Activated naive CD4-positive, alpha-beta T cell treated with anti-CD3 and anti-CD28 coated beads for 36 hours (primary cell): ENCODE measurements at regions of chr2 and their contacts with region 1.

Region 1: DNA sequence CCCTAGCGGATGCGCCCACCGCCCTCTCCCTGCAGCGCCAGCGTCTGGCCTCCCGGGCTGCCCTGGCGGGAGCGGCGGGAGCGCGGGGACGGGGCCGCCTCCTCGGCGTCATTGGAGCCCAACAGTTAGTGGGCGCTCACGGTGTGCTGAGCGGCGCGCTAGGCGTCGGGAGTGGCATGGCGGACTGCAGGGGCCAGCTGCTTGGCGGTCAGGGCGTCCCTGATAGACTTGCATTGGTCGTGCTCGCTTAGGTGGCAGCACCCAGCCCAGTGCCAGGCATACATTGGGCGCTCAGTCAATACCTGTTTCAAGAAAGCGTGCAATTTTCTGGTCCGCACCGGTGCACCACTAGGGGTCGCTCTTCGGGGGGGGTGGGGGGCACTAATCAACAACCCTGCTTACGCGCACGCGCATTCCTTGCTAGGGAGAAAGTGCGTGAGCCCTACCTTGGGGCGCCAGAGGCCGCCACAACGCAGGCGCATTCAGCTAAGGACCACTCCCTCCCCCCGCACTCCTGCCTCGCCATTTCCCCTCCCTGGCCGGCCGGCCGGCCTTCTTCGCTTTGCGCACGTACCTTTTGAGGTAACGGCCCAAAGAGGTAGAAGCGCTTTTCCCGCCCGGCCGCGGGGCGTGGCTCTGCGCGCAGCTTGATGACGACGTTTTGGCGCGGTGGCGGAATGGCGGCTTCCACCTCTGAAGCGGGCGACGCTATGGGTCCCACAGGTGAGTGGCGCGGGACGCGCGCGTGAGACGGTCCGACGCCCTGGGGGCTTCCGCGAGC is 411 bp upstream of the MZT2A start:
- DNase-seq: peak; percentile 95
- H3K4me3 Mint-ChIP-seq: peak overlapping the region; percentile 86
- H3K27ac Mint-ChIP-seq: peak overlapping the region; percentile 85
- H3K4me1 Mint-ChIP-seq: peaks cover 43% of the 10 kb centered on the region
- H3K27me3 Mint-ChIP-seq: no peaks in the 10 kb centered on the region

Region 2: GRCh38 chr2:130372055-130372832 is 1120.4 kb before region 1 on chr2:
- CTCF ChIA-PET with region 1: no interaction called
- intact Hi-C with region 1: loop called (anchors 10 kb)
- DNase-seq: peak; percentile 82
- H3K4me3 Mint-ChIP-seq: peak overlapping the region; percentile 86
- H3K27ac Mint-ChIP-seq: peak overlapping the region; percentile 93
- H3K4me1 Mint-ChIP-seq: peaks cover 46% of the 10 kb centered on the region
- H3K27me3 Mint-ChIP-seq: no peaks in the 10 kb centered on the region

Region 3: GRCh38 chr2:130744287-130745117 is 748.1 kb before region 1 on chr2:
- CTCF ChIA-PET with region 1: no interaction called
- intact Hi-C with region 1: no loop called
- DNase-seq: no peak
- H3K4me3 Mint-ChIP-seq: no peak overlapping the region
- H3K27ac Mint-ChIP-seq: no peak overlapping the region
- H3K4me1 Mint-ChIP-seq: no peaks in the 10 kb centered on the region
- H3K27me3 Mint-ChIP-seq: peaks cover 10% of the 10 kb centered on the region

Region 4: GRCh38 chr2:131105156-131105949 is 387.3 kb before region 1 on chr2 and contains the start of gene PLEKHB2:
- CTCF ChIA-PET with region 1: interaction called, 5 read pairs
- intact Hi-C with region 1: loop called (anchors 1 kb)
- DNase-seq: peak; percentile 92
- H3K4me3 Mint-ChIP-seq: peak within 1 kb of the TSS; percentile 93
- H3K27ac Mint-ChIP-seq: peak within 1 kb of the TSS; percentile 98
- H3K4me1 Mint-ChIP-seq: peaks cover 40% of the 10 kb centered on the region
- H3K27me3 Mint-ChIP-seq: no peaks in the 10 kb centered on the region
- total RNA-seq, gene PLEKHB2: 43.4 to 43.9 TPM

Region 5: GRCh38 chr2:131394147-131394931 is 98.3 kb before region 1 on chr2:
- CTCF ChIA-PET with region 1: no interaction called
- intact Hi-C with region 1: no loop called
- DNase-seq: peak; percentile 50
- H3K4me3 Mint-ChIP-seq: no peak overlapping the region
- H3K27ac Mint-ChIP-seq: no peak overlapping the region
- H3K4me1 Mint-ChIP-seq: peaks cover 4% of the 10 kb centered on the region
- H3K27me3 Mint-ChIP-seq: peaks cover 3% of the 10 kb centered on the region

Region 6: GRCh38 chr2:131425231-131425941 is 67.2 kb before region 1 on chr2:
- CTCF ChIA-PET with region 1: interaction called, 6 read pairs
- intact Hi-C with region 1: loop called (anchors 5 kb)
- DNase-seq: no peak
- H3K4me3 Mint-ChIP-seq: peak overlapping the region; percentile 19
- H3K27ac Mint-ChIP-seq: no peak overlapping the region
- H3K4me1 Mint-ChIP-seq: peaks cover 7% of the 10 kb centered on the region
- H3K27me3 Mint-ChIP-seq: peaks cover 45% of the 10 kb centered on the region

Region 7: DNA sequence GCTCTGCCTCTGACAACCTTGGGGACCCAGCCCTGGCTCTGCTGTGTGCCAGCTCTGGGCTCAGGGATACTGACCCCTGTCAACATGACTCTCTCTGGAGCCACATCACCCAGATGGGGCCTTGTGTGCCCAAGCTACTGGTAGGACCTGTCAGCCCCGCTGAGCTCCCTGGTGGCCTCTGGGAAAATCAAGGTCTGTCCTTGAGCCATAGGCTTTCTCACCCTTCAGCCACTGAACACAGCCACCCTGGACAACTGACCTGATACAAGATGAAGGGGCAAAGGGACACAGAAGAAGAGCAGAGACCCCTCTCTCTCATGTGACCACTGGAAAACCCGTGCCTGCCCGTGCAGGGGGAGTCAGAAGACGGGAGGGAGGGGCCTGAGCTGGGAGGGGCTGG is 42.9 kb after region 1 on chr2:
- CTCF ChIA-PET with region 1: no interaction called
- intact Hi-C with region 1: no loop called
- DNase-seq: no peak
- H3K4me3 Mint-ChIP-seq: no peak overlapping the region
- H3K27ac Mint-ChIP-seq: no peak overlapping the region
- H3K4me1 Mint-ChIP-seq: no peaks in the 10 kb centered on the region
- H3K27me3 Mint-ChIP-seq: no peaks in the 10 kb centered on the region

Region 8: GRCh38 chr2:131673392-131674173 is 181.0 kb after region 1 on chr2:
- CTCF ChIA-PET with region 1: no interaction called
- intact Hi-C with region 1: loop called (anchors 2 kb)
- DNase-seq: peak; percentile 77
- H3K4me3 Mint-ChIP-seq: peak overlapping the region; percentile 24
- H3K27ac Mint-ChIP-seq: no peak overlapping the region
- H3K4me1 Mint-ChIP-seq: peaks cover 3% of the 10 kb centered on the region
- H3K27me3 Mint-ChIP-seq: peaks cover 13% of the 10 kb centered on the region